Astrocyte of the cerebellum (primary cell): ENCODE measurements at regions of chr11 and their contacts with region 1.

Region 1: GRCh38 chr11:64000026-64000739 is 13.9 kb downstream of the OTUB1 start:
- DNase-seq: peak; percentile 23
- H3K4me3 ChIP-seq: peak overlapping the region; percentile 26
- CTCF ChIP-seq: peak; percentile 52

Region 2: DNA sequence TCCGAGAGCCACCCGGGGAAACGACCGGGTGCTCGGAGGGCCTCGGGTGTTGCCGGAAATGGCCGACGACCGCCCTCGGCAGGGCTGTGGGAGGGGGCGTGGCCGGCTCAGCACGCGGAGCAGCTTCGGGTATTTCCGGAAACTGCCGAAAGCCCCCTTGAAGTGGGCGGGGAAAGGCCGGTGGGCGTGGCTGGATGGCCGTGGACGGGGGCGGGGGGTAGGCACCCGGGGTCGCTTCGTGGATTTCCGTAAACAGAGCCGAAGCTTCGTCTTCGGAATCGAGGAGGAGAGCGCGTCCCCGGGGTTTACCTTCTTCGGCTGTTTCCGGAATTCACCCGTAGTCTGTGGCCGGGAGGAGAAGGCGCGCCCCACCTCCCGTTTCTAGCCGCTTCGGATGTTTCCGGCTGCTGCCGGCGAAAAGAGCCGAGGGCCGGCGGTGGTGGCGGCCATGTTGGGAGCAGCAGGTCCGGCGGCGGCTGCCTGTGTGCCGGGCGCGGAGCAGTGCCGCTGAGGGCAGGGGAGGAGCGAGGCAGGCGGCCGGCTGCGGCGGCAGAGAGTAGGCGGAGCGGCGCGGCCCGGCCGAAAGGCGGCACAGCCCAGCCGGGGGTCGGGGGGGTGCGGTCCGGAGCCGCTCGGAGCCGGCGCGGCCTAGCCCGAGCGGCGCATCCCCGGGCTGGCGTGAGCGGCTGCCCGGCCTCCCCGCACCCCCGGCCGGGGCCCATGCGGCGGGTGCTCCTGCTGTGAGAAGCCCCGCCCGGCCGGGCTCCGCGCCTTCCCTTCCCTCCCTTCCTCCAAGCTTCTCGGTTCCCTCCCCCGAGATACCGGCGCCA is 161.3 kb before region 1 on chr11 and contains the start of gene MARK2:
- in situ Hi-C with region 1: no loop called
- DNase-seq: peak; percentile 96
- H3K4me3 ChIP-seq: peak within 1 kb of the TSS; percentile 91
- CTCF ChIP-seq: no peak

Region 3: GRCh38 chr11:64060861-64061444 is 60.8 kb after region 1 on chr11:
- in situ Hi-C with region 1: no loop called
- DNase-seq: no peak
- H3K4me3 ChIP-seq: peak overlapping the region; percentile 33
- CTCF ChIP-seq: no peak

Region 4: GRCh38 chr11:64074239-64074638 is 74.1 kb after region 1 on chr11:
- in situ Hi-C with region 1: loop called (anchors 10 kb)
- DNase-seq: no peak
- H3K4me3 ChIP-seq: no peak overlapping the region
- CTCF ChIP-seq: no peak

Region 5: GRCh38 chr11:64131683-64132190 is 131.6 kb after region 1 on chr11:
- in situ Hi-C with region 1: loop called (anchors 5 kb)
- DNase-seq: no peak
- H3K4me3 ChIP-seq: no peak overlapping the region
- CTCF ChIP-seq: no peak

Region 6: DNA sequence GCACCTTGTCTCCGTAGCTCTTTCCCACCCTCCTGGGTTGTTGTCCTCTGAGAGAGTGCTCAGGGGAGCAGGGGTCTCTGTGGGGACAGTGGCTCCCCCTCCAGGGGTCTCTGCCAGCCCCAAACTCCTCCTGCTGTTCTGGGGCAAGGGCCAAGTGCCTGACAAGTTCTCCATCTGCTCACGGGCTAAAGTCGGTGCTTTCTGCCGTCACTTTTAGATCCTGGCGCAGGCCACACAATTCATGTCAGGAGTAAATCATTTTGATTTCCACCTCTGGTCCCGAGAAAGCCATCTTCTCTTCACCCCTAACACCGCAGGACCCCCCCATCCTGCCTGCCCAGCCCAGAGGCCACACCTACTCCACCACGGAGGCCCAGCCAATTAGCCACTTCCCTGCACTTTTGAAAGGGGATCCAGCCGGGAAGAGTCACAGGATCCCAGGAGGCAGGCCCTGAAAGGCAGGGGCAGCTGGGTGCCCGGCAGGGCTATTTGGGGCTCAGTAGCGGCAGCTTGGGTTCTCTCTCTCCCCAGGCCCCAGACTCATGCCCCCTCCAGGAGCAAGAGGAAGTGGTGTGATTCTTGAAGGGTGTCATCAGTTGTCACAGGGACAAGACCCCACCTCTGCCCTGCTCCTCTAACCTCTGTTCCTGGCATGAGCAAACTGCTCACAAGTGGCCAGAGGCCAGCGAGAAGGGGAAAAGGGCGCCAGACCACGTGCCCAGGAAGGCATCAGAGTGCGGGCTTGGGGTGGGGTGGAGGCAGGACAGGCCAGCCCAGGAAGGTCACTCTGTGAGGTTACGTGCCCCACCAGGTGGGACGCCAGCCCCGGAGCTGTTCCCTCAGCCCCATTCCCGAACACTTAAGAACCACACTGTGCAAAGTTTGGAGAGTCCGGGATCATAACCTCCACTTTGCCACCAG is 164.5 kb after region 1 on chr11:
- in situ Hi-C with region 1: loop called (anchors 5 kb)
- DNase-seq: no peak
- H3K4me3 ChIP-seq: peak overlapping the region; percentile 68
- CTCF ChIP-seq: no peak

Region 7: GRCh38 chr11:64304316-64305072 is 304.3 kb after region 1 on chr11:
- in situ Hi-C with region 1: no loop called
- DNase-seq: peak; percentile 59
- H3K4me3 ChIP-seq: peak overlapping the region; percentile 58
- CTCF ChIP-seq: peak; percentile 88